ENCODE measurements at regions of chr1 and their contacts with region 1.

Region 1: GRCh38 chr1:3564921-3565827 is 46.1 kb downstream of the MEGF6 start:
- DNase-seq: no peak
- H3K4me3 ChIP-seq: no peak overlapping the region
- CTCF ChIP-seq: peak; percentile 92

Region 2: GRCh38 chr1:3553166-3553939 is 11.8 kb before region 1 on chr1:
- CTCF ChIA-PET with region 1: interaction called, 22 read pairs
- POLR2A ChIA-PET with region 1: no interaction called
- DNase-seq: no peak
- H3K4me3 ChIP-seq: no peak overlapping the region
- CTCF ChIP-seq: no peak

Region 3: DNA sequence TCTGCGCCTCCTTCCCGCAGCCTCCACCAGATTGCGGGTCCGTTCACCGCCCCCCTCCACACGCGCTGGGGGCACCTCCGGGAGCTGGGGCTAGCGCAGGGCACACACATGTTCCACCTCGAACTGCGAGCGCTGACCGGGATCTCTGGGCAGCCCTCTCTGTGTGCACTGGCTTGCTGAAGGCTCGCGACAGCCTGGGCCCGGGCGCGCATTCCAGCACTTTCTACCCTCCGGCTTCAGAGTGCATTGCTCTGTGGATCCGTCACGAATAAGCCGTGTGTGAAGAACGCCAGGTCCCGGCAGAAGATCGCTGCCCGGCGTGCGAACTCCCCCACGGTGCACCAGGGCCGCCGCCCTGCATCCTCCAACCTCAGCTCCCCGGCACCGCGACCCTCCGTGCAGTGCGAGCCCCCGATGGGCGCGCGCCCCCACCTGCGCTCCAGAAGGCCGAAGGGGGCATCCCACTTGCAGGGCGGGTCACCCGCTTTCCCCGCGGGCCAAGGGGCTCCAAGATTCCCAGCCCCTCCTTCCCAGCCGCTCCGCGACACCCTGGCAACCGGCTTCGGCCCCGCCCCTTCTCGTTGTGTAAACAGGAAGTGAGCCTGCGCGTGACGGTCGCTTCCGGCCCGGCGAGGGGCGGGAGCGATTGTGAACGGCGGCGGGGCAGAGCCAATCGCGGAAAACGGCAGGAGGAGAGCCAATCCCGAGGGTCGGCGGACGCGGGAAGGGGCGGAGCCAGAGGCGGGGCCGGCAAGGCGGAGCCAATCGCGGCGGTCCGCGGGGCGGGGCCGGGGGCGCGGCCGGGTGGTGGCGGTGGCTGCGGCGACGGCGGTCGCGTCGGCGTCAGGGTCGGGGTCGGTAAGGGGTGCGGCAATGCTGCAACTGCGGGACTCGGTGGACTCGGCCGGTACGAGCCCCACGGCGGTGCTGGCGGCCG is 59.3 kb after region 1 on chr1 and contains the start of gene TPRG1L:
- CTCF ChIA-PET with region 1: interaction called, 158 read pairs
- POLR2A ChIA-PET with region 1: no interaction called
- DNase-seq: peak; percentile 34
- H3K4me3 ChIP-seq: peak within 1 kb of the TSS; percentile 94
- CTCF ChIP-seq: no peak

Region 4: GRCh38 chr1:3642919-3643675 is 77.9 kb after region 1 on chr1:
- CTCF ChIA-PET with region 1: no interaction called
- POLR2A ChIA-PET with region 1: no interaction called
- DNase-seq: no peak
- H3K4me3 ChIP-seq: no peak overlapping the region
- CTCF ChIP-seq: no peak